ENCODE measurements at regions of chr10 and their contacts with region 1.

Region 1: GRCh38 chr10:14761372-14761771 is 13.3 kb downstream of the FAM107B start:
- DNase-seq: no peak
- ATAC-seq: no peak
- H3K4me3 ChIP-seq: no peak overlapping the region
- H3K27ac ChIP-seq: no peak overlapping the region
- H3K4me1 ChIP-seq: no peaks in the 10 kb centered on the region
- H3K27me3 ChIP-seq: no peaks in the 10 kb centered on the region
- CTCF ChIP-seq: no peak
- POLR2A ChIP-seq: no peak

Region 2: DNA sequence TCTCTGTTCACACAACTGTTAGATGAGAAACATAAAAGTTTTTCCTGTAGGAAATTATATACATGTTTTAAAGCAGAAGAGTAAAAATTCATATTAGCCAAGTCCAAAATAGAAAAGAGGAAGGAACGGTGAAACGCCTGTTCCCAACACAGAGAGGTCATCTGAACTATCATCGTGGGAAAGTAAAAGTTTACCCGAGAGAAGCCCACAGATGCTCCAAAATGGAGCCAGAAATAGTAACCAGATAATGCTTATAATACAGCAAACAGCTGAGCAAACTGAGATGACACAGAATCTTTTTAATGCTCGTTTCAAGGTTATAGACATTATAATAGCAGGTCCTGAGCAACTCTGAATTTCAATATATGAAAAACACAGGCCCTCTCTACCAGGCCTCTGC is 455.2 kb before region 1 on chr10:
- intact Hi-C with region 1: loop called in 1 of 10 experiments (anchors 5 kb)
- DNase-seq: no peak
- ATAC-seq: peak in 1 of 4 donors; percentile 32
- H3K4me3 ChIP-seq: no peak overlapping the region
- H3K27ac ChIP-seq: peak overlapping the region in 3 of 12 donors; percentile 5 to 37 (median 21)
- H3K4me1 ChIP-seq: peaks cover 0 to 4% (median 0%) of the 10 kb centered on the region in 12 donors
- H3K27me3 ChIP-seq: peaks cover 0 to 5% (median 0%) of the 10 kb centered on the region in 9 donors
- CTCF ChIP-seq: no peak
- POLR2A ChIP-seq: no peak

Region 3: GRCh38 chr10:14325325-14325955 is 435.9 kb before region 1 on chr10:
- intact Hi-C with region 1: no loop called
- DNase-seq: peak in 1 of 5 donors; percentile 38
- ATAC-seq: no peak
- H3K4me3 ChIP-seq: no peak overlapping the region
- H3K27ac ChIP-seq: no peak overlapping the region
- H3K4me1 ChIP-seq: no peaks in the 10 kb centered on the region
- H3K27me3 ChIP-seq: peaks cover 0 to 37% (median 1%) of the 10 kb centered on the region in 9 donors
- CTCF ChIP-seq: peak in 11 of 12 donors; percentile 12 to 51 (median 43)
- POLR2A ChIP-seq: no peak

Region 4: GRCh38 chr10:14705548-14706230 is 55.7 kb before region 1 on chr10:
- intact Hi-C with region 1: no loop called
- DNase-seq: no peak
- ATAC-seq: no peak
- H3K4me3 ChIP-seq: no peak overlapping the region
- H3K27ac ChIP-seq: no peak overlapping the region
- H3K4me1 ChIP-seq: peaks cover 0 to 5% (median 0%) of the 10 kb centered on the region in 12 donors
- H3K27me3 ChIP-seq: no peaks in the 10 kb centered on the region
- CTCF ChIP-seq: no peak
- POLR2A ChIP-seq: no peak